ENCODE measurements at regions of chr19 and their contacts with region 1.

Region 1: GRCh38 chr19:43425567-43426392 is 11.1 kb downstream of the TEX101 start:
- DNase-seq: no peak
- ATAC-seq: peak; percentile 67
- H3K4me3 Mint-ChIP-seq: no peak overlapping the region
- H3K27ac Mint-ChIP-seq: no peak overlapping the region
- H3K4me1 Mint-ChIP-seq: peaks cover 32% of the 10 kb centered on the region
- H3K27me3 Mint-ChIP-seq: no peaks in the 10 kb centered on the region
- CTCF ChIP-seq: no peak

Region 2: GRCh38 chr19:43265664-43266025 is 160.1 kb before region 1 on chr19:
- CTCF ChIA-PET with region 1: interaction called, 13 read pairs
- POLR2A ChIA-PET with region 1: no interaction called
- DNase-seq: no peak
- ATAC-seq: no peak
- H3K4me3 Mint-ChIP-seq: no peak overlapping the region
- H3K27ac Mint-ChIP-seq: no peak overlapping the region
- H3K4me1 Mint-ChIP-seq: no peaks in the 10 kb centered on the region
- H3K27me3 Mint-ChIP-seq: no peaks in the 10 kb centered on the region; the same call in none of the 2 replicates
- CTCF ChIP-seq: no peak

Region 3: DNA sequence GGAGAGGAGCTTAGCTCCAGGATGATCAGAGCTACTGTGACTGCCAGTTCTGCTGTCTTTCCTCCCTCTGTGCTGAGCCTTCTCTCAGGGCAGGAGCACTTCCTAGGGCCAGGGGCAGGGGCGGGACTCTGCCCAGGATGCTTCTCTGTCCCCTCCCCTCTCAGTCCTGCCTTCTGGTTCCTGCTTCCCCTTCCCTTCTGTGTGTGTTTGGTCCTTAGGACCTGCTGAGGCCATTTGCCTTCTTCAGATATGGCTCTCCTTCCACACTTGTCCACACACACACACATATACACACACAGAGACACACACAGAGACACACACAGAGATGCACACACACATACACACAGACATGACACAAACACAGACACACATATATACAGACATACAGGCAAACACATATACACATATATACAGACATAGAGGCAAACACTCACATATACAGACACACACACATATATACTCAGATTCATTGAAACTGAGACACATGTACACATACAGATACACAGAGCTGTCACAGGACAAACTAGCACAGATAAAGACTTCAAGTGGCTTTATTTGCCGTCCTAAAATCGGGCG is 94.3 kb before region 1 on chr19:
- CTCF ChIA-PET with region 1: interaction called, 14 read pairs
- POLR2A ChIA-PET with region 1: no interaction called
- DNase-seq: no peak
- ATAC-seq: peak; percentile 50
- H3K4me3 Mint-ChIP-seq: no peak overlapping the region
- H3K27ac Mint-ChIP-seq: peak overlapping the region; percentile 25
- H3K4me1 Mint-ChIP-seq: peaks cover 25% of the 10 kb centered on the region
- H3K27me3 Mint-ChIP-seq: peaks cover 13% of the 10 kb centered on the region
- CTCF ChIP-seq: no peak

Region 4: DNA sequence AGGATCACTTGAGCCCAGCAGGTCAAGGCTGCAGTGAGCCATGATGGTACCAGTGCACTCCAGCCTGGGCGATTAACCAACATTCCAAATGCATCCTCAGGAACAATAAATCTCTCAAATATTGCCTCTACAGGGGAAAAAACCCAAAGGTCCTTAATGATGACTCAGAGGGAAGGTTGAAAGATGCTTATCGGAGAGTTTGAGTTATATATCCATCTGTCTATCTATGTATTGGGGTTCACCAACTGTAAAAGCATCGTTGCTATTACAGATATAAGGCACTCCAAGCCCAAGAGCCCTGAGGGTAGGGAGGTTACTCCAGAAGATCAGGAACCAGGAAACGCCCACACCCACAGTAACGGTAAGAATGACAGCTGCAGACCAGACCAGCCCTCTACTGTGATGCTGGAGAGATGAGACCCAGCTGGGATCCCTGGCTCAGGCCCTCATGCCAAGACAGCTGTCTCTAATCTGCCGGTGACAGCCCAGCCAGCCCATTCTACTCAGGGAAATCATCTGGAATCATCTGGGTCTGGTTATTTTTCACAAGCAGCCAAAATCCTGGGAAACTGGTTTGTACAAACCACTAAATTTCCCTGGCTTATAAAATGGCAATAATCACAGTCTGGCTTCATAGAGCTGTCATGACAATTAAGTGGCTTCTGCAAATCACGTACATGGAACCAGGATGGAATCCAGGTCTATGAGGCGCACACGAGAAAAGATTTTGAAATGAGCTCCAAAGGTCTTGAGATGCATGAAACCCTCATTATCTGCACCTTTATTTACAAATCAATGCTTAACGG is 12.7 kb after region 1 on chr19:
- CTCF ChIA-PET with region 1: interaction called, 11 read pairs
- POLR2A ChIA-PET with region 1: no interaction called
- DNase-seq: no peak
- ATAC-seq: no peak
- H3K4me3 Mint-ChIP-seq: no peak overlapping the region
- H3K27ac Mint-ChIP-seq: no peak overlapping the region
- H3K4me1 Mint-ChIP-seq: peaks cover 4% of the 10 kb centered on the region; the same call in 1 of the 2 replicates
- H3K27me3 Mint-ChIP-seq: peaks cover 3% of the 10 kb centered on the region; the same call in 1 of the 2 replicates
- CTCF ChIP-seq: no peak

Region 5: GRCh38 chr19:43545981-43546380 is 120.2 kb after region 1 on chr19:
- CTCF ChIA-PET with region 1: no interaction called
- POLR2A ChIA-PET with region 1: no interaction called
- DNase-seq: no peak
- ATAC-seq: no peak
- H3K4me3 Mint-ChIP-seq: no peak overlapping the region
- H3K27ac Mint-ChIP-seq: no peak overlapping the region
- H3K4me1 Mint-ChIP-seq: no peaks in the 10 kb centered on the region
- H3K27me3 Mint-ChIP-seq: no peaks in the 10 kb centered on the region
- CTCF ChIP-seq: no peak